GM13977 (cell line): ENCODE measurements at regions of chr9 and their contacts with region 1.

Region 1: GRCh38 chr9:18208154-18209059 is 265.5 kb upstream of the ADAMTSL1 start:
- DNase-seq: no peak
- CTCF ChIP-seq: peak; percentile 32

Region 2: DNA sequence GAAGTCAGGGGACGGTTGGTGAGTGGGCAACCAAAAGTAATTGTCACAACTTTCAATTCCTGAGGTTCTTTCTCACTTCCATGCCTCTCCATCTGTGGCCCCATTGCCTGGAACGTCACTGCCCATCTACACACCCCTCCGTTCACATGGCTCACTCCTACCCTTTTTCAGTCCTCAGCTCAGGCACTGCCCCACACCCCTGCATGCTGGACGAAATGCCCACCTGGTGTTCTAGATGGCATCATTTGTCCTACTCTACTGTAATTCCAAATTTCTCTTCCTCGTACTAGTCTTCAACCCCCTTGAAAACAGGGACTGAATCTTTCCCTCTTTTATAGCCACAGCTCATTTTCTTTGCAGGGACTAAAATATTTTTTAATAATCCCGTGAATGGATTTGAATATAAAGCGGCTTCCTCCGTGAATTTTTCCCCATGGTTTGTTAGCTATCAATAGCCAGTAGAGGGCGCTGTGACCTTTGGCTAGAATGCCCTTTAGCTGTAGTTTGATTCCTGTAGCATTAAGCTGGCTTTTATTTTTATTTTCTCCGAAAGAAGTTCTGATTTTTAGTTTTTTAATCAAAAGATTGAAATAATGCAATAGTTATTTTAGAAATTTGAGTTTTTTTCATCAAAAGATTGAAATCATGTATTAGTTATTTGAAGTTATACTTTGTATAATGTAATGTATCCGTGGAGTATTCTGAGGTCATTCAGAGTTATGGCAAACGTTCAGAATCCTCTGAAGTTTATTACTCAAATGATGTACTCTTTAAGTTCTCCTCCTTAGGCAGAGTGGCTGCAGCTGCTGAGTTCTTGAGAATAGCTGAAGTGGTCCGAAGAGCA is 397.5 kb before region 1 on chr9:
- in situ Hi-C with region 1: loop called (anchors 10 kb)
- DNase-seq: peak; percentile 42
- CTCF ChIP-seq: peak; percentile 80